ENCODE measurements at regions of chr13 and their contacts with region 1.

Region 1: GRCh38 chr13:26423629-26424028 is 133.9 kb upstream of the WASF3 start:
- DNase-seq: peak; percentile 92
- H3K4me3 ChIP-seq: peak overlapping the region in 3 of 4 donors; percentile 3 to 20 (median 3)
- H3K27ac ChIP-seq: peak overlapping the region; percentile 85 to 92 (median 88)
- H3K4me1 ChIP-seq: peaks cover 0 to 77% (median 62%) of the 10 kb centered on the region in 4 donors
- H3K27me3 ChIP-seq: no peaks in the 10 kb centered on the region
- CTCF ChIP-seq: no peak
- EP300 ChIP-seq: peak; percentile 43 to 90 (median 66)
- POLR2A ChIP-seq: no peak

Region 2: GRCh38 chr13:26221721-26222519 is 201.7 kb before region 1 on chr13 and contains the start of gene RNF6:
- intact Hi-C with region 1: loop called (anchors 5 kb)
- DNase-seq: peak; percentile 98
- H3K4me3 ChIP-seq: peak within 1 kb of the TSS; percentile 79 to 96 (median 92)
- H3K27ac ChIP-seq: peak within 1 kb of the TSS; percentile 95 to 98 (median 96)
- H3K4me1 ChIP-seq: peaks cover 0 to 26% (median 21%) of the 10 kb centered on the region in 4 donors
- H3K27me3 ChIP-seq: no peaks in the 10 kb centered on the region
- CTCF ChIP-seq: peak in 1 of 4 experiments; percentile 35
- EP300 ChIP-seq: no peak
- POLR2A ChIP-seq: peak in 1 of 2 donors; percentile 29
- total RNA-seq, gene RNF6: 11.9 to 27.1 (median 22.5) TPM

Region 3: GRCh38 chr13:26247608-26248007 is 176.0 kb before region 1 on chr13:
- intact Hi-C with region 1: no loop called
- DNase-seq: no peak
- H3K4me3 ChIP-seq: no peak overlapping the region
- H3K27ac ChIP-seq: no peak overlapping the region
- H3K4me1 ChIP-seq: no peaks in the 10 kb centered on the region
- H3K27me3 ChIP-seq: no peaks in the 10 kb centered on the region
- CTCF ChIP-seq: no peak
- EP300 ChIP-seq: no peak
- POLR2A ChIP-seq: no peak

Region 4: DNA sequence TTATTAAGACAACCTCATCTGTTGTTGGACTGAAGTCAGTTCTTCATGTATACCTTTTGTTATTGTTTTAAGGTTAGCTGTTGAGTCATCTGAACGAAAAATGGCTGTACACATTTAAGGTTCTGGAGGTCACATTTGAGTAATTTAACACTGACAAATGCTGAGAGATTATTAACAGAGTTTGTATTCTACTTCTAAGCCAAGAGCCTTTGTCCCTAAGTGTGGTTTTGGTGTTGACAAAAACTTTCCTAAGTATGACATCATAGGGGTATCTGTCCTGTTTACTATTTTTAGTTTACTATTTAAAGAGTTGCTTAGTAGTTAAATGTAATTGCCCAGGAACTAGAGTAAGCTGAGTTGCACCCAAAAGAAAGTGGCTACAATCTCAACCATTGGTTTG is 97.8 kb before region 1 on chr13:
- intact Hi-C with region 1: loop called (anchors 5 kb)
- DNase-seq: no peak
- H3K4me3 ChIP-seq: no peak overlapping the region
- H3K27ac ChIP-seq: peak overlapping the region in 3 of 4 donors; percentile 47 to 76 (median 69)
- H3K4me1 ChIP-seq: peaks cover 0 to 70% (median 42%) of the 10 kb centered on the region in 4 donors
- H3K27me3 ChIP-seq: no peaks in the 10 kb centered on the region
- CTCF ChIP-seq: no peak
- EP300 ChIP-seq: no peak
- POLR2A ChIP-seq: no peak

Region 5: DNA sequence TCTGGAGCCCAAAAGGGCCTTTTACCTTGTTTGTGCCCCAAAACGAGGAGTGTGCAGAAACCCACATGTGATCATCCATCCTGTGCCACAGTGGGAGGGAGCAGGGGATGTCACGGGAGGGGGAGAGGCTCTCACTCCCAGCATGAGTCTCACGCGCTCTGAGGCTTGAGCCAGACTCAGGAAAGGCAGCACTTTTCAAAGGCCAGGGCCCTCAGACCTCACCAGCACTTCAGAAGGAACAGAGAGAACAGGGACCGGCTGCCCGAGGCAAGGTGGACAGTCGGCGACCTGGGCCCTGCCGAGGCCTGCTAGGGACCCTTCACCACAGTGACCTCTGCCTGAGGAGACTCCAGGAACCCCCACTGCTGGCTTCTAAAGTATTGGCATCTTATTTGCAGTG is 62.2 kb after region 1 on chr13:
- intact Hi-C with region 1: loop called (anchors 5 kb)
- DNase-seq: peak; percentile 80
- H3K4me3 ChIP-seq: no peak overlapping the region
- H3K27ac ChIP-seq: peak overlapping the region; percentile 46 to 84 (median 74)
- H3K4me1 ChIP-seq: peaks cover 0 to 32% (median 26%) of the 10 kb centered on the region in 4 donors
- H3K27me3 ChIP-seq: no peaks in the 10 kb centered on the region
- CTCF ChIP-seq: no peak
- EP300 ChIP-seq: no peak
- POLR2A ChIP-seq: no peak